ENCODE measurements at regions of chr18 and their contacts with region 1.

Region 1: GRCh38 chr18:48109961-48110493 is 179.6 kb upstream of the SMAD2 start:
- DNase-seq: no peak
- ATAC-seq: no peak
- H3K4me3 ChIP-seq: no peak overlapping the region
- H3K27ac ChIP-seq: no peak overlapping the region
- H3K4me1 ChIP-seq: no peaks in the 10 kb centered on the region
- H3K27me3 ChIP-seq: peaks cover 0 to 9% (median 0%) of the 10 kb centered on the region in 3 donors
- CTCF ChIP-seq: no peak

Region 2: DNA sequence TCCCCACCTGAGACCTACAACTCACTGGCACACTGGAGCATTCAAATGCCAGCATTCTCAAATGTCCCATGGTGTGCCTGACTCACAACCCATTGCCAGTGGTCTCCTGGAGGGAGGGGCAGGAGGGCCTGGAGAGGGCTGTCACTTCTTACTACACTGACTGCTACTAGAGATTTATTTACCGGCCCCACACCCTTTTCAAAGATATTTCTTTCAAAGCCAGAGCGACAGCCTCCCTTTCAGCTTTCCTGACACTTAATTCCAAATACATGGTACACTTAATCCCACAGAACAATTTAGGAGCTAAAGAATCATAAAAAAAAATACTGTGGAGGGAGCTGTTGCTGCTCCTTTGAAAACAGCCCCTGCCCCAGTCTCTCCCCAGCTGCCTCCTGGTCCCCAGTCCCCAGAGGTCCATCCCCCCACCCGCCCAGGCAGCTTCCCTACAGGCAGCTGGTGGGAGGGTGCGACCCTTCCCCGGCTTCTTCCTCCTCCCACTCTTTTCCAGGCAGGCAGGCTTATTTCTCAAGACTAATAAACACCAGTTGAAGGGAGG is 50.5 kb before region 1 on chr18:
- intact Hi-C with region 1: loop called in 1 of 2 experiments (anchors 5 kb)
- DNase-seq: no peak
- ATAC-seq: peak; percentile 30 to 61 (median 46)
- H3K4me3 ChIP-seq: no peak overlapping the region
- H3K27ac ChIP-seq: no peak overlapping the region
- H3K4me1 ChIP-seq: no peaks in the 10 kb centered on the region
- H3K27me3 ChIP-seq: peaks cover 0 to 4% (median 0%) of the 10 kb centered on the region in 3 donors
- CTCF ChIP-seq: no peak

Measured in psoas muscle (tissue), 8 donors.